ENCODE measurements at regions of chr14 and their contacts with region 1.

Region 1: GRCh38 chr14:37546621-37547447 is 48.2 kb downstream of the FOXA1 start:
- DNase-seq: peak; percentile 89
- ATAC-seq: peak; percentile 87
- H3K4me3 ChIP-seq: peak overlapping the region; percentile 65
- H3K27ac ChIP-seq: peak overlapping the region; percentile 97
- H3K4me1 ChIP-seq: peaks cover 62% of the 10 kb centered on the region
- H3K27me3 ChIP-seq: no peaks in the 10 kb centered on the region
- CTCF ChIP-seq: no peak

Region 2: DNA sequence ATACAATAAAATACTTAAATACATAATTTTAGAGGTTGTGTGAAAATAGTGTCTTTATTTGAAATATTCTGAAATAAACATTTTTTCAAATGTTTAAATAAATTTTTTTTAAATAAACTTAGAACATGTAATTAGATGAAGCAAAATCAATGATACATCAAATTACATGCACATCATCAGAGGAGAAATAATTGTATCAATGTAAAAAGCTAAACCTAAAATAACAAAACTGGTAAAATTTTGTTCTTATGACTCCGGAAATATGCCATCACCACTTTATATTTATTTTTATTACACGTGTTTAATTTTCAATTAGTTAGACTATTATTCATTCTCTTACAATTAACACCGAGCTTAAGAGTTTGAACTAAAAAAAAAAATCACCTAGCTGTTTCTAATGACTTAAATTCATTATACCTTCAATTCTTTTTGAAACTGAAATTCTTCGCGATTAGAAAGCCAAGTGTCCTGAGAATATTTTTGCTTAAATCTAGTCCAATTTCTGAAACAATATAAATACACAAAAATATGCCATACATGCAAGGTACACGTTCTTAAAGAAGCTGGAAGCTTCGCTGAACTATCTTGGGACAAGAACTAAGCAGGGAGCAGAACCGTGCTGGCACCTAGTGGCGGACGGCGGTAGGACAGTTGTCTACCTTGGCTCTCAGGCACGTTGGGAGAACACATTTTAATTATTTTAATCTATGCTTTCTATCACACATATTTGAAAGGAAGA is 604.9 kb before region 1 on chr14:
- CTCF ChIA-PET with region 1: no interaction called
- POLR2A ChIA-PET with region 1: no interaction called
- intact Hi-C with region 1: no loop called
- DNase-seq: peak; percentile 88
- ATAC-seq: peak; percentile 57
- H3K4me3 ChIP-seq: no peak overlapping the region
- H3K27ac ChIP-seq: peak overlapping the region; percentile 89
- H3K4me1 ChIP-seq: peaks cover 40% of the 10 kb centered on the region
- H3K27me3 ChIP-seq: no peaks in the 10 kb centered on the region
- CTCF ChIP-seq: peak; percentile 97

Region 3: GRCh38 chr14:37253905-37254304 is 292.9 kb before region 1 on chr14:
- CTCF ChIA-PET with region 1: no interaction called
- POLR2A ChIA-PET with region 1: no interaction called
- intact Hi-C with region 1: loop called (anchors 5 kb)
- DNase-seq: peak; percentile 94
- ATAC-seq: peak; percentile 64
- H3K4me3 ChIP-seq: no peak overlapping the region
- H3K27ac ChIP-seq: no peak overlapping the region
- H3K4me1 ChIP-seq: peaks cover 41% of the 10 kb centered on the region
- H3K27me3 ChIP-seq: no peaks in the 10 kb centered on the region
- CTCF ChIP-seq: no peak

Region 4: GRCh38 chr14:37329189-37330001 is 217.4 kb before region 1 on chr14:
- CTCF ChIA-PET with region 1: no interaction called
- POLR2A ChIA-PET with region 1: no interaction called
- intact Hi-C with region 1: loop called (anchors 2 kb)
- DNase-seq: peak; percentile 64
- ATAC-seq: peak; percentile 80
- H3K4me3 ChIP-seq: no peak overlapping the region
- H3K27ac ChIP-seq: peak overlapping the region; percentile 58
- H3K4me1 ChIP-seq: peaks cover 18% of the 10 kb centered on the region
- H3K27me3 ChIP-seq: no peaks in the 10 kb centered on the region
- CTCF ChIP-seq: no peak

Region 5: GRCh38 chr14:37515771-37516170 is 31.1 kb before region 1 on chr14:
- CTCF ChIA-PET with region 1: no interaction called
- POLR2A ChIA-PET with region 1: interaction called, 5 read pairs
- intact Hi-C with region 1: loop called (anchors 2 kb)
- DNase-seq: no peak
- ATAC-seq: no peak
- H3K4me3 ChIP-seq: no peak overlapping the region
- H3K27ac ChIP-seq: no peak overlapping the region
- H3K4me1 ChIP-seq: peaks cover 10% of the 10 kb centered on the region
- H3K27me3 ChIP-seq: no peaks in the 10 kb centered on the region
- CTCF ChIP-seq: no peak